Mammary epithelial cell (primary cell): ENCODE measurements at regions of chr15 and their contacts with region 1.

Region 1: GRCh38 chr15:63791228-63791627 is 42.5 kb downstream of the HERC1 start:
- DNase-seq: no peak
- H3K4me3 ChIP-seq: no peak overlapping the region
- H3K27ac ChIP-seq: no peak overlapping the region
- H3K4me1 ChIP-seq: no peaks in the 10 kb centered on the region
- H3K27me3 ChIP-seq: no peaks in the 10 kb centered on the region
- CTCF ChIP-seq: no peak

Region 2: DNA sequence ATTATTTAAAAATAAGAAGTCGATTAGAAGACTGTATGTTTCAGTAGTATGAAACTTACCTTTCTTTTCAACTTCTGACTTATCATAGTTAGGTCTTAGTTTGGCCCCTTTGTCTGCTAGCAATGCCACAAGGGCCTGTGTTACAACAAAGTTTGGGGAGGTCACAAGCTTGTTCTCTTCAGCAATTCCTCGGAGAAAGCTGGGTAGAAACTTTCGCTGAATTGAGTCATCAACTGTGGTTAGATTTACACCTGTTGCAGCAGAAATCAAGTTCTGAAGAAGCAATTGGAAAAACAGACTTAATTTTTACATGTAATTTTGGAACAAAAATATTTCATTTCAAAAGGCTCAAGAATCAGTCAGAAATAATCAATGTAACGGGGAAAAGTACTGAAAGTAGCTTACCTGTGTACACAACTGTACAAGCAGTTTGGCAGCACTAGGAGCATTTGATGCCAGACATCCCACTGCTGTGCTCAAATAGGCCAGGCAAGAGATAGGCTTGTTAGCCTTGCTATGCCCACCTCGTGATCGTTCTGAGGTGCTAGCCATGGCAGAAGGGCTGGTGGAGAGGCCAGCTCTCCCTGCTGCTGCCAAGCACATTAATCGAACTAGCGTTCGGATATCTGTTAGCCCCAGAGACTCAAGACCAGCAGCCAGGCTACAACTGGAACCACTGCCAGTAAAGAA is 135.4 kb before region 1 on chr15:
- CTCF ChIA-PET with region 1: no interaction called
- dilution Hi-C with region 1: no loop called
- in situ Hi-C with region 1: no loop called
- intact Hi-C with region 1: no loop called
- DNase-seq: no peak
- H3K4me3 ChIP-seq: no peak overlapping the region
- H3K27ac ChIP-seq: no peak overlapping the region
- H3K4me1 ChIP-seq: no peaks in the 10 kb centered on the region
- H3K27me3 ChIP-seq: no peaks in the 10 kb centered on the region
- CTCF ChIP-seq: no peak

Region 3: GRCh38 chr15:63712828-63713520 is 78.3 kb before region 1 on chr15:
- CTCF ChIA-PET with region 1: no interaction called
- dilution Hi-C with region 1: no loop called
- in situ Hi-C with region 1: no loop called
- intact Hi-C with region 1: no loop called
- DNase-seq: no peak
- H3K4me3 ChIP-seq: no peak overlapping the region
- H3K27ac ChIP-seq: no peak overlapping the region
- H3K4me1 ChIP-seq: no peaks in the 10 kb centered on the region
- H3K27me3 ChIP-seq: no peaks in the 10 kb centered on the region
- CTCF ChIP-seq: no peak

Region 4: DNA sequence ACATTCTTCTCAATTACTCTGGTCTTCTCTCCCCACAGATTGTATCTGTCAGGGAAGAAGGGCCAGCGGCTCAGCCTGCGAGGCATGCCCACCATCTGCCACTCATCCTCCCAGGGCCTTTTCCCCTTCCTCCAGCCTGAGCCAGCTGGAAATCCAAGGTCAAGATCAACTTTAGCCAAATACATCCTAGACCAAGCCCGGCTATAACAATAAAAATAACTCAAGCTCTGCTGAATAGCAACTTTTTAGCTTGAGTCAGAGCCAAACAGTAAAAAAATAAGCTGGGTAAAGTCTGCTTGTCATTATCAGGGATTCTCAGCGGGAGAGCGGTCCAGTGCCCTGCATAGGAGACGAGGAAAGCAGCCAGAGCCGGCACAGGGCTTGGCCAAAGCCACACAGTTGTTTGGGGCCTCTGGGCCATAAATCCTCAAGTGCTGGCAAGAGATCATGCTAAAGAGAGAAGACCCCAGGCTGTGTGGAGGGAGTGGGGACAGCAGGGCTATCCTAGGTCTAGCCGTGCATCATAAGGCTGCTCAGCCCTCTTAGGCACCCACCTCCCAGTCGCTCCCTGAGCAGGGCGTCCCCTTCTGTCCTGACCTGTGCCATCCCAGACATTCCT is 118.7 kb after region 1 on chr15:
- CTCF ChIA-PET with region 1: interaction called, 16 read pairs
- dilution Hi-C with region 1: no loop called
- in situ Hi-C with region 1: no loop called
- intact Hi-C with region 1: no loop called
- DNase-seq: no peak
- H3K4me3 ChIP-seq: no peak overlapping the region
- H3K27ac ChIP-seq: no peak overlapping the region
- H3K4me1 ChIP-seq: peaks cover 30% of the 10 kb centered on the region
- H3K27me3 ChIP-seq: no peaks in the 10 kb centered on the region
- CTCF ChIP-seq: no peak